Right ventricle myocardium inferior (tissue), 1 donor: ENCODE measurements at regions of chrX and their contacts with region 1.

Region 1: GRCh38 chrX:37825209-37825842 is 22.0 kb downstream of the DYNLT3 start:
- DNase-seq: no peak
- ATAC-seq: no peak

Region 2: GRCh38 chrX:37509349-37509748 is 316.0 kb before region 1 on chrX:
- intact Hi-C with region 1: loop called (anchors 10 kb)
- DNase-seq: no peak
- ATAC-seq: no peak

Region 3: DNA sequence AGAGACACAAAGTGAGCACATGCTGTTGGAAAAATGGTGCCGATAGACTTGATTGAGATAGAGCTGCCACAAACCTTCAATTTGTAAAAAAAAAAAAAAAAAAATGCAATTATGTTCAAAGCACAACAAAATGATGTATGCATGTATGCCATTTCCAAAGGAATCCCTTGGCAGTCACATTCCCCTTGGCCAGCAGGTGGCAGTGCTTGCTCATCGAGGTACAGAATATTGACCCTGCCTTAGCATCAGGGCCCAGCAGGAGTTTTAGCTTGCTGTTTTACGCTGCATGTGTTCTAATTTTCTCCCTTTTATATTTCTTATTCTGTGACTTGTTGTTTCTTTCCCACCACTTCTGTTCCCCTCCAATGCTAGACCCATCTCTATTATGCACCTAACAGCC is 80.0 kb before region 1 on chrX:
- intact Hi-C with region 1: loop called (anchors 2 kb)
- DNase-seq: peak; percentile 69
- ATAC-seq: peak; percentile 59

Region 4: DNA sequence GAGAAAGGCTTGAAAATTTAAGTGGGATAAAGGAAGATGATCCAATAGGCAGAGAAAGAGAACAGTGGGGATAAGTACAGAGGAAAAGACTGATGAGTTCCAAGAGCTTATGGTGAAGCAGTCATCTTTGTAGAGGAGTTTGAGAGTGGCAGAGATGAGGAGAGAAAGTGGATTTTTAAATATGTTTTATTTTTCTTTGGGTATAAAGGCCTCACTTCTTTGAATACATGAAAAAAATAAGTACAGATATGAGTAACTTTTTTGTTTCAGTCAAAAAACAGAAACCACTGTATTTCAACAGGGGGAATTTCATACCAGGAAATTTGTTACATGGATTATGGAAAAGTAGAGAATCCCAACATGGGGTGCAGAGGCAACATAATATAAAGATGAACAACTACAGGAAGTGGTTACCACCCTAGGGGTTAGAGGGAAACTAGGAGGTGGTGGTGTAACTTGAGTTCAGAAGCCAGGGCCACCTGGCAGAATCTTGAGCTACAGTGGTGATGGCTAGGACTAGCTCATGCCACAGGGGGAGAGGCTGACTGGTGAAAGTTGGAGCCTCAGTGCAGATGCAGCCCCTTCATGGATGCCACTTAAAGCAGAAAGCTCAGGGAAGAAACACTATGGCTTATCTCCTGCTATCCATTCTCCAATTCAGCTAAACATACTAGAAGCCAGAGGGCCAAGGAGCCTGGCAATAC is 48.9 kb before region 1 on chrX:
- intact Hi-C with region 1: no loop called
- DNase-seq: no peak
- ATAC-seq: no peak